ENCODE measurements at regions of chr19 and their contacts with region 1.

Region 1: GRCh38 chr19:55418185-55418584 is 10.6 kb upstream of the UBE2S start:
- H3K4me3 ChIP-seq: no peak overlapping the region
- H3K27ac ChIP-seq: no peak overlapping the region
- H3K4me1 ChIP-seq: no peaks in the 10 kb centered on the region
- CTCF ChIP-seq: peak; percentile 61

Region 2: GRCh38 chr19:54481322-54481930 is 936.8 kb before region 1 on chr19:
- CTCF ChIA-PET with region 1: no interaction called
- POLR2A ChIA-PET with region 1: interaction called, 11 read pairs
- H3K4me3 ChIP-seq: no peak overlapping the region
- H3K27ac ChIP-seq: no peak overlapping the region
- H3K4me1 ChIP-seq: no peaks in the 10 kb centered on the region
- CTCF ChIP-seq: peak; percentile 67

Region 3: GRCh38 chr19:55160128-55160985 is 257.8 kb before region 1 on chr19:
- CTCF ChIA-PET with region 1: interaction called, 11 read pairs
- POLR2A ChIA-PET with region 1: interaction called, 3 read pairs
- H3K4me3 ChIP-seq: no peak overlapping the region
- H3K27ac ChIP-seq: 0 out of 2 replicates have a peak overlapping the region, but pooled peaks have one; percentile 10
- H3K4me1 ChIP-seq: peaks cover 6% of the 10 kb centered on the region
- CTCF ChIP-seq: peak; percentile 94

Region 4: GRCh38 chr19:55301459-55302317 is 116.5 kb before region 1 on chr19:
- CTCF ChIA-PET with region 1: interaction called, 18 read pairs
- POLR2A ChIA-PET with region 1: no interaction called
- H3K4me3 ChIP-seq: peak overlapping the region; percentile 18
- H3K27ac ChIP-seq: no peak overlapping the region; the same call in 1 of the 2 replicates
- H3K4me1 ChIP-seq: peaks cover 3% of the 10 kb centered on the region; the same call in 1 of the 2 replicates
- CTCF ChIP-seq: peak; percentile 93

Region 5: DNA sequence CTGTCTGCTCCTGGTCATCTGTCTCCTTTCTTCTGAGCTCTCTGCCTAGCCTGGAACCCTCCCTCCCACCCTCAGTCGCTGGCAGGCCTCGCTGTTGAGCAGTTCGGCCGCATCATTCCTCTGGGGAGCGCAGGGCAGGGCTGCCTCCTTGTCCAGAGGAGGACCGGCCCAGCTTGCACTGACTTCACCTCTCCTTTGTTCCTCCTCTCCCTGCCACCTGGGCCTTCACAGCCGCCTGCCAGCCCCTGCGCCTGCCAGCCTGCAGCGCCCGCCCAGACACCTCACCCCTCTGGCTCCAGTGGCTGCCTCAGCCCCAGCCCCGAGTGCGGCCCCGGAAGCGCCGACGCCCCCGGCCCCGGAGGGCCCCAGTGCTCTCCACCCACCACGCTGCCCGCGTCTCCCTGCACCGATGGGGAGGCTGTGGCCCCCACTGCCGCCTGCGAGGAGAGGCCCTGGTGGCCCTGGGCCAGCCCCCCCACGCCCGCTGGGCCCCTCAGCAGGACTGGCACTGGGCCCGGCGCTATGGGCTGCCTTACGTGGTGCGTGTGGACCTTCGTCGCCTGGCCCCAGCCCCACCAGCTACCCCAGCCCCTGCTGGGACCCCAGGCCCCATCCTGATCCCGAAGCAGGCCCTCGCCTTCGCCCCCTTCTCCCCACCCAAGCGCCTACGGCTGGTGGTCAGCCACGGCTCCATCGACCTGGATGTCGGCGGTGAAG is 71.3 kb before region 1 on chr19:
- CTCF ChIA-PET with region 1: no interaction called
- POLR2A ChIA-PET with region 1: no interaction called
- H3K4me3 ChIP-seq: no peak overlapping the region
- H3K27ac ChIP-seq: no peak overlapping the region
- H3K4me1 ChIP-seq: 0 out of 2 replicates have a peak, but pooled peaks cover 3% of the 10 kb centered on the region
- CTCF ChIP-seq: no peak

Region 6: DNA sequence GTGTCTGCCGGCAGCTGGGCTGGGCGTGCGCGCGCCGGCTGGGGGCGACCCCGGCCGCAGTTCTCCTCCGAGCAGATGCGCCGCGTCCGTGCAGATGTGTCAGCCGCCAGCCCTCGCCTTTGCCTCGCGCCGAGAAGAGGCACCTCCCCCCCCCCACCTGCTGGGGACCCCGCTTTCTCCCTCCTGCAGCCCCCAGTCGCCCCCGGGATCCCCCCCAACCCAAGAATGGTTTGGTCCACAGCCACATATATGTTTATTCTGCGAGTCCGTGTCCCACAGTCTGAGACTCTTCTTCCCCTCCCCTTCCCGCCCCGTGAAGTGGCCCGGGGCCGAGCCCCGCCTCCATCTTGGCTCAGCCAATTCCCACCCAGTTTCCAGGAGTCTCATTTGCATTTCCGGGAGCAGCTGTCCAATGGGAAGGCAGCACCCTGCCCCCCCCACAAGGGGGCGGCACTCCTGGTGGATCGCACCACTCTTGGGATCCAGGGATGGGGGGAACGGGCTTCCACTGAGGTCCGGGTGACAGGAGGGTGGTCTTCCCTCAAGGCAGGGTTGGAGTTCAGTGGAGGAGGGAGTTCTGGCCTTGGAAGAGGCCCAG is 34.7 kb after region 1 on chr19:
- CTCF ChIA-PET with region 1: interaction called, 19 read pairs
- POLR2A ChIA-PET with region 1: interaction called, 5 read pairs
- H3K4me3 ChIP-seq: no peak overlapping the region
- H3K27ac ChIP-seq: no peak overlapping the region
- H3K4me1 ChIP-seq: no peaks in the 10 kb centered on the region
- CTCF ChIP-seq: no peak

Region 7: GRCh38 chr19:56140583-56141416 is 722.6 kb after region 1 on chr19 and contains the start of gene ZNF444:
- CTCF ChIA-PET with region 1: no interaction called
- POLR2A ChIA-PET with region 1: interaction called, 14 read pairs
- H3K4me3 ChIP-seq: peak within 1 kb of the TSS; percentile 81
- H3K27ac ChIP-seq: peak within 1 kb of the TSS; percentile 86
- H3K4me1 ChIP-seq: peaks cover 12% of the 10 kb centered on the region
- CTCF ChIP-seq: no peak